B cell (primary cell): ENCODE measurements at regions of chr19 and their contacts with region 1.

Region 1: GRCh38 chr19:6048808-6049405 is 61.4 kb downstream of the RFX2 start:
- DNase-seq: peak; percentile 84
- ATAC-seq: peak; percentile 99
- H3K4me3 ChIP-seq: no peak overlapping the region
- H3K4me3 Mint-ChIP-seq: no peak overlapping the region
- H3K27ac ChIP-seq: no peak overlapping the region
- H3K27ac Mint-ChIP-seq: no peak overlapping the region
- H3K4me1 ChIP-seq: no peaks in the 10 kb centered on the region
- H3K4me1 Mint-ChIP-seq: peaks cover 4% of the 10 kb centered on the region
- H3K27me3 ChIP-seq: no peaks in the 10 kb centered on the region
- H3K27me3 Mint-ChIP-seq: no peaks in the 10 kb centered on the region
- CTCF ChIP-seq: peak; percentile 88

Region 2: DNA sequence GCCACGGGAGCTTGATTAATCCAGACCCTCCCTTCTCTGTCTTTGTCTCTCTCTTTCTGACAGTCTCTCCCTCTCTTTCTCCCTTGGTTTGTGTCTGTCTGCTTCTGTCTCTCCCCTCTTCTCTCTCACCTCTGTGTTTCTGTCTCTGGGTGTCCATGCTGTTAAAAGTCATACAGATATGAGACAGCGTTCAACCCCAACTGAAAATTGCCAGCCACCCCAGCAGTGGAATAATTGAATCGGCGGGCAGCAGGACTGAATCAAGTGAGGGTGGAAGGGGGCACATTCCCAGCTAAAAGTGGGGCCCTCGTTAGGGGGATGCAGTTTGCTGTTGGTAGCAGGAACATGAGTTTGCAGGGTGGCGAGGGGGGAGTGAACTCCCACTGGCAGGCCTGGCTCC is 524.8 kb before region 1 on chr19:
- CTCF ChIA-PET with region 1: no interaction called
- POLR2A ChIA-PET with region 1: no interaction called
- intact Hi-C with region 1: no loop called
- DNase-seq: no peak
- ATAC-seq: no peak
- H3K4me3 ChIP-seq: no peak overlapping the region
- H3K4me3 Mint-ChIP-seq: no peak overlapping the region
- H3K27ac ChIP-seq: no peak overlapping the region
- H3K27ac Mint-ChIP-seq: no peak overlapping the region
- H3K4me1 ChIP-seq: no peaks in the 10 kb centered on the region
- H3K4me1 Mint-ChIP-seq: no peaks in the 10 kb centered on the region
- H3K27me3 ChIP-seq: no peaks in the 10 kb centered on the region
- H3K27me3 Mint-ChIP-seq: peaks cover 15% of the 10 kb centered on the region
- CTCF ChIP-seq: no peak

Region 3: DNA sequence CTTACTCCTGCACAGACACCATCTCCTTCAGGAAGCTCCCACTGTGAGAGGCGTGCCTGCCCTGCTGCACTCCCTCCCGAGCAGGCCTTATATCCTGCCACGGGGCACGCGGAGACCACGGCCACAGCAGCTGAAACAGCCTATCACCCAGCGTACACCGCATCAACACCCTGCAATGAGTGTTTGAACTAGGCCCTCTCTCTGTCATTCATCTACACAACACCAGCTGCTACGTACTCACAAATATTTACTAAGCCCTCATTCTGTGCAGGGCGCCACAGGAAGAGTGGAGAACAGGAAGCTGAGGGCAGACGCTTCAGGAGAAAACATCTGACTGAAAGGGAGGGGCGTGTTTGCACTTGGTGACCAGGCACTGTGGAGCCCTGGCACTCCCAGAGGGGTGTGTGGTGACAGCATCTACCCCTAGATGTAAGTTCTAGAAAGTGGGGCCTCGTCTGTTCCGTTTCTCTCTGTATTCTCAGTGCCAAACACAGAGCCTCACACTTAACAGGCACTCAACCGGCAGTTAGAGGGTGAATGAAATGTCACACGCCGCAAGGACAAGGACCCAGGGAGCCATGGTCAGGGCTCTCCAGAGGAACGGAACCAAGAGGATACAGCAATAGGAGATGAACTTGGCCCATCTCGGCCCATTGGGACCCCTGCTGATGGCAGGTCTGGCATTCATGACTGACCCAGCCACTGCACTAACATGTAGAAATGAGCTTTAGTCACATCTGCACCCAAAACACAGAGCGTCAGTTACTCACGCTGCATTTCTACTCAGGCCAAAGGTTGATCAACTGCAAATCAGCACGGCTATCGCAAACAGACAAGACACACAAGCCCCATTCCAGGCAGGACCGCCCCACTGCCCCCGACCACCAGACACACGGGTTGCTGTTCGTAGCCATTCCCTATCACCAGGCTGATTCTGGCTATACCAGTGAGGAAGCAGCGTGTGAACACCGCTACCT is 86.7 kb before region 1 on chr19:
- CTCF ChIA-PET with region 1: no interaction called
- POLR2A ChIA-PET with region 1: no interaction called
- intact Hi-C with region 1: no loop called
- DNase-seq: peak; percentile 45
- ATAC-seq: peak; percentile 88
- H3K4me3 ChIP-seq: peak overlapping the region in 3 of 5 experiments; percentile 1 to 19 (median 5)
- H3K4me3 Mint-ChIP-seq: peak overlapping the region; percentile 82
- H3K27ac ChIP-seq: peak overlapping the region; percentile 17 to 19
- H3K27ac Mint-ChIP-seq: peak overlapping the region; percentile 86
- H3K4me1 ChIP-seq: peaks cover 17 to 36% of the 10 kb centered on the region in 2 donors
- H3K4me1 Mint-ChIP-seq: peaks cover 74% of the 10 kb centered on the region
- H3K27me3 ChIP-seq: no peaks in the 10 kb centered on the region
- H3K27me3 Mint-ChIP-seq: no peaks in the 10 kb centered on the region
- CTCF ChIP-seq: no peak

Region 4: DNA sequence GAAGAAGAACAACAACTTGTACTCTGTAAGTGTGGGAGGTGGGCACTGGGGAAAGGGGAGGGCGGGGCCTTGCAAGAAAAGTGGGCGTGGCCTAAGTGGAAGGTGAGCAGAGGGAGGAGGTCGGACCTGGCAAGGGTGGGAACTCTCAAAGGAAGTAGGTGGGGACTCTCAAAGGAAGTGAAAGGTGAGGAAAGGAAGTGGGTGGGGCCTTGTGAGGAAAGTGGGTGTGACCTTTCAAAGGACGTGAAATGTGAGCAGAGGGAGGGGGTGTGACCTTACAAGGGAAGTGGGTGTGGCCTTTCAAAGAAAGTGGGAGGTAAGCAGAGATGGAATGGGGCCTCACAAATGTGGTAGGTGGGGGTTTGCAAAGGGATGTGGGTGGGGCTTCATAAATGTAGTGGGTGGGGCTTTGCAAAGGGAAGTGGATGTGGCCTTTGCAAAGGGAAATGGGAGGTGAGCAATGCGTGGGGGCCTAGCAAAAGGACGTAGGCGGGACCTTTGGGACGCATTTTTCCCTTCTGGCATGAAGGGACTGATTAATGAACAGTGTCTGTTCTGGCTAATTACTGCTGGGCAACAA is 112.5 kb after region 1 on chr19:
- CTCF ChIA-PET with region 1: no interaction called
- POLR2A ChIA-PET with region 1: no interaction called
- intact Hi-C with region 1: loop called (anchors 1 kb)
- DNase-seq: peak; percentile 72
- ATAC-seq: peak; percentile 56
- H3K4me3 ChIP-seq: no peak overlapping the region
- H3K4me3 Mint-ChIP-seq: no peak overlapping the region
- H3K27ac ChIP-seq: no peak overlapping the region
- H3K27ac Mint-ChIP-seq: no peak overlapping the region
- H3K4me1 ChIP-seq: peaks cover 6 to 10% of the 10 kb centered on the region in 2 donors
- H3K4me1 Mint-ChIP-seq: peaks cover 7% of the 10 kb centered on the region
- H3K27me3 ChIP-seq: peaks cover 0 to 7% (median 0%) of the 10 kb centered on the region in 4 experiments
- H3K27me3 Mint-ChIP-seq: no peaks in the 10 kb centered on the region
- CTCF ChIP-seq: no peak

Region 5: GRCh38 chr19:6402837-6403608 is 354.1 kb after region 1 on chr19:
- CTCF ChIA-PET with region 1: no interaction called
- POLR2A ChIA-PET with region 1: no interaction called
- intact Hi-C with region 1: no loop called
- DNase-seq: no peak
- ATAC-seq: no peak
- H3K4me3 ChIP-seq: no peak overlapping the region
- H3K4me3 Mint-ChIP-seq: no peak overlapping the region
- H3K27ac ChIP-seq: no peak overlapping the region
- H3K27ac Mint-ChIP-seq: no peak overlapping the region
- H3K4me1 ChIP-seq: no peaks in the 10 kb centered on the region
- H3K4me1 Mint-ChIP-seq: no peaks in the 10 kb centered on the region
- H3K27me3 ChIP-seq: no peaks in the 10 kb centered on the region
- H3K27me3 Mint-ChIP-seq: no peaks in the 10 kb centered on the region
- CTCF ChIP-seq: no peak